PC-3 (cell line): ENCODE measurements at regions of chr1 and their contacts with region 1.

Region 1: DNA sequence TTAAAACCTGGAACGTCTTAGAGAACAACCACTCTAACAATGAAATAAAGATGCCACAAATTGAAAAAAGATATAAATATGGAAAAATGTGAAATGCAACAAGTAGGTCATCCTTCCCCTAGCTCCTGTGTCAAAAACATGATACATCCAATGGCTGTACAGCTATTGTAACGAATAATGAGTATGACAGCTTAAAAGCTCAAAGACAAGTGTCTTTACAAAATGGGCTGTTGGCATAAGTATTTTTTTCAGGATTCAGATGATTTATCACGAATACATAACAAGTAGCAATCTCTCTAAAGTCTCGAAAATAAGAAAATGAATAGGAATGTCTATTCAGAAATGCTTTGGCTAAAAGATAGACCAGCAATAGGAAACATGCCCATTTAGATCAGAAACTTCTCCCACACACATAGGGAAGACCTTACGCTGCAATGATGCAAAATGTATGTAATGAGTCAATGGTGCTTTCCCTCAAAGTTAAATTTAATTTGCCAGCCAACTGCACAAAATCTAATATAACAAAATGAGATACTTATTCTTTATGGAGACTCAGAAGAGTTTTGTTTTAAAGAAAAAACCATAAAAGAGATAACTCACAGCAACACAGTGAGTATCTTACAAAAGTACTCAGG is 8.3 kb downstream of the TGFBR3 start:
- DNase-seq: peak; percentile 13
- ATAC-seq: no peak
- H3K4me3 ChIP-seq: no peak overlapping the region
- H3K27ac ChIP-seq: no peak overlapping the region
- H3K4me1 ChIP-seq: peaks cover 18% of the 10 kb centered on the region
- H3K27me3 ChIP-seq: no peaks in the 10 kb centered on the region
- CTCF ChIP-seq: no peak

Region 2: GRCh38 chr1:91851130-91852010 is 26.3 kb before region 1 on chr1:
- CTCF ChIA-PET with region 1: no interaction called
- POLR2A ChIA-PET with region 1: no interaction called
- intact Hi-C with region 1: loop called (anchors 2 kb)
- DNase-seq: peak; percentile 83
- ATAC-seq: peak; percentile 92
- H3K4me3 ChIP-seq: peak overlapping the region; percentile 52
- H3K27ac ChIP-seq: peak overlapping the region; percentile 77
- H3K4me1 ChIP-seq: peaks cover 25% of the 10 kb centered on the region
- H3K27me3 ChIP-seq: no peaks in the 10 kb centered on the region
- CTCF ChIP-seq: no peak